Panc1 (cell line): ENCODE measurements at regions of chr17 and their contacts with region 1.

Region 1: GRCh38 chr17:82160075-82160474 is 52.6 kb downstream of the CCDC57 start:
- DNase-seq: no peak
- ATAC-seq: no peak
- H3K4me3 ChIP-seq: no peak overlapping the region
- H3K27ac ChIP-seq: no peak overlapping the region
- H3K4me1 ChIP-seq: no peaks in the 10 kb centered on the region
- H3K27me3 ChIP-seq: no peaks in the 10 kb centered on the region
- CTCF ChIP-seq: no peak

Region 2: GRCh38 chr17:82105882-82106687 is 54.0 kb before region 1 on chr17:
- CTCF ChIA-PET with region 1: interaction called, 5 read pairs
- POLR2A ChIA-PET with region 1: interaction called, 12 read pairs
- in situ Hi-C with region 1: no loop called
- intact Hi-C with region 1: no loop called
- DNase-seq: no peak
- ATAC-seq: peak; percentile 70
- H3K4me3 ChIP-seq: peak overlapping the region in 1 of 2 experiments; percentile 24; a peak in 2 of 4 replicates
- H3K27ac ChIP-seq: peak overlapping the region; percentile 97
- H3K4me1 ChIP-seq: peaks cover 69% of the 10 kb centered on the region
- H3K27me3 ChIP-seq: no peaks in the 10 kb centered on the region
- CTCF ChIP-seq: peak; percentile 61

Region 3: DNA sequence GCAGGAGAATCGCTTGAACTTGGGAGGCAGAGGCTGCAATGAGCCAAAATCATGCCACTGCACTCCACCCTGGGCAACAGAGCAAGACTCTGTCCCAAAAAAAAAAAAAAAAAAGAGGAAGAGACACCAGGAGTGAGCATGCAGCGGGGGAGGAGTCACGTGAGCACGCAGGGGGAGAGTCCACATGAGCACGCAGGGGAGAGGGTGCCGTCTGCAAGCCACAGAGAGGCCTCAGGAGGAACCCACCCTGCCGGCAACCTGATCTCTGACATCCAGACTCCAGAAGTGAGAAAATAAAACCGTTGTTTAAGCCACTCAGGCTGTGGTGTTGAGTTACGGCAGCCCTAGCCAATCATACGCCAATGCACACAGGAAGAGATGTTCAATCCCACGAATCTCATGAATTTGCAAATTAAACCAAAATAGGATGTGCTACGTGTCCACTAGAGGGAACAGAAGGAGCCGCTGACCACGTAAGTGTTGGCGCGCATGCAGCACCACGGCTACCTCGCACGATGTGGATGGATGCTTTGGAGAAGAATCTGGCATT is 10.4 kb after region 1 on chr17:
- CTCF ChIA-PET with region 1: no interaction called
- POLR2A ChIA-PET with region 1: interaction called, 17 read pairs
- in situ Hi-C with region 1: no loop called
- intact Hi-C with region 1: no loop called
- DNase-seq: no peak
- ATAC-seq: no peak
- H3K4me3 ChIP-seq: no peak overlapping the region
- H3K27ac ChIP-seq: no peak overlapping the region
- H3K4me1 ChIP-seq: no peaks in the 10 kb centered on the region
- H3K27me3 ChIP-seq: no peaks in the 10 kb centered on the region
- CTCF ChIP-seq: no peak